ENCODE measurements at regions of chr12 and their contacts with region 1.

Region 1: GRCh38 chr12:28190321-28191050 is at the start of gene CCDC91:
- DNase-seq: peak; percentile 77
- ATAC-seq: peak; percentile 89
- H3K4me3 ChIP-seq: peak within 1 kb of the TSS; percentile 81
- H3K27ac ChIP-seq: peak within 1 kb of the TSS; percentile 93
- H3K4me1 ChIP-seq: peaks cover 5% of the 10 kb centered on the region
- H3K27me3 ChIP-seq: no peaks in the 10 kb centered on the region
- CTCF ChIP-seq: no peak
- POLR2A ChIP-seq: peak; percentile 70
- RAD21 ChIP-seq: no peak
- total RNA-seq, gene CCDC91: 14.7 and 17.5 TPM in 2 replicates

Region 2: DNA sequence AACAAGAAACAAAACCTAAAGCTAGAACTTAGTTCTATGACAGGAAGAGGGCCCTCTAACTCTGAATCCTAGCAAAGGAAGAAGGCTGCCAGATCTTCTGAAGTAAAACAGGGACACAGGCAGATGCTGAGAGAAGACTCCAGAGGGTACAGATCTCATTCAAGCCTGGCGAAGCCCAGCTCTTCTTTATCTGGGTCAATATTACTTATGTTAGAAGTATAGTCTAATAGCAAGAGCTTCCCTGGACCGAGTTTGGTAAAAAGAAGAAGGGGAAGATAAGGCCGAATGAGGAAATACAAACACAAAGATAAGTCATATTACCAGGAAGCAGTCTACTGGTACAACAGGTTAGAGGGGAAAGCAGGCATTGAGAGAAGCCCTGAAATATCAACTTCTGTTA is 80.2 kb before region 1 on chr12:
- CTCF ChIA-PET with region 1: no interaction called
- POLR2A ChIA-PET with region 1: no interaction called
- dilution Hi-C with region 1: no loop called
- in situ Hi-C with region 1: no loop called
- intact Hi-C with region 1: no loop called
- DNase-seq: no peak
- ATAC-seq: no peak
- H3K4me3 ChIP-seq: no peak overlapping the region
- H3K27ac ChIP-seq: no peak overlapping the region
- H3K4me1 ChIP-seq: peaks cover 3% of the 10 kb centered on the region; the same call in 1 of the 2 replicates
- H3K27me3 ChIP-seq: no peaks in the 10 kb centered on the region
- CTCF ChIP-seq: no peak
- POLR2A ChIP-seq: no peak
- RAD21 ChIP-seq: no peak

Region 3: GRCh38 chr12:28569698-28570411 is 379.4 kb after region 1 on chr12:
- CTCF ChIA-PET with region 1: no interaction called
- POLR2A ChIA-PET with region 1: no interaction called
- dilution Hi-C with region 1: no loop called
- in situ Hi-C with region 1: no loop called
- intact Hi-C with region 1: loop called (anchors 2 kb)
- DNase-seq: peak; percentile 80
- ATAC-seq: peak; percentile 82
- H3K4me3 ChIP-seq: no peak overlapping the region
- H3K27ac ChIP-seq: peak overlapping the region; percentile 86
- H3K4me1 ChIP-seq: peaks cover 14% of the 10 kb centered on the region
- H3K27me3 ChIP-seq: no peaks in the 10 kb centered on the region
- CTCF ChIP-seq: no peak
- POLR2A ChIP-seq: no peak
- RAD21 ChIP-seq: no peak

Region 4: GRCh38 chr12:29486972-29487371 is 1296.5 kb after region 1 on chr12:
- CTCF ChIA-PET with region 1: no interaction called
- POLR2A ChIA-PET with region 1: no interaction called
- dilution Hi-C with region 1: no loop called
- in situ Hi-C with region 1: no loop called
- intact Hi-C with region 1: no loop called
- DNase-seq: no peak
- ATAC-seq: no peak
- H3K4me3 ChIP-seq: no peak overlapping the region
- H3K27ac ChIP-seq: no peak overlapping the region
- H3K4me1 ChIP-seq: no peaks in the 10 kb centered on the region
- H3K27me3 ChIP-seq: no peaks in the 10 kb centered on the region
- CTCF ChIP-seq: no peak
- POLR2A ChIP-seq: no peak
- RAD21 ChIP-seq: no peak